ENCODE measurements at regions of chr21 and their contacts with region 1.

Region 1: GRCh38 chr21:17139720-17140119 is 373.1 kb upstream of the CXADR start:
- DNase-seq: no peak
- ATAC-seq: no peak
- H3K4me3 ChIP-seq: peak overlapping the region; percentile 37
- H3K27ac ChIP-seq: no peak overlapping the region
- H3K4me1 ChIP-seq: no peaks in the 10 kb centered on the region
- H3K27me3 ChIP-seq: no peaks in the 10 kb centered on the region
- CTCF ChIP-seq: no peak

Region 2: DNA sequence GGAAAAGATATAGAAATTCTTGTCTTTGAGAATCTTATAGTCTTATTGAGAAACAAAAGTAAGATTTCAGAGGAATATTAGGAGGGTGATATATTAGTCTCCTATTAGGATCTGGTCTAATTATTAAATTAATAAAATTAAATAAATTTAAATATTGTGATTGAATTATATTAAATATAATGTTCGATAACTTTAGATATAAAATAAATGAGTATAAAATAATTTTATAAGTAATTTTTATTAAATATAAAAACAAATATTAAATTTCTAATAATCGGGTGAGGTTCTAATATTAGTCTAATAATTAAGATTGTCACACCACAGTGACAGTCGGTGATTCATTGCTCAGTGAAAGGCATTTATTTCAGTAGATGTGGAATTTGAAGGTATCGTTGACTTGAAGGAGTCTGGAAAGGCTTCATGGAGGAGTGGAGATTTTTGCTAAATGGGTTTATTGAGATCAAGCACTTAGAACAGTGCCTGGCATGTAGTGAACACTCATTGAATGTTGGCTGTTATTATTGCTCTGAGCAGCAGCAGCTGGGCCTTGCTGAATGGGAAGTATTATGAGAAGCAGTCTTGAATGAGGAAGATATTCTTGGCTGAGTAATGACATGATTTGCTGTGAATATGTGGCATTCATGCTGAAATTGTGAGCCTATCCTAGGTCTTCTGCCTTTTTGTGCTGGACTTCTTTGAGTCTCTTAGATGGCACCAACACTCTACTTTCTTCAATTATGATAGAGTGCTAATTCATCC is 1335.3 kb before region 1 on chr21:
- intact Hi-C with region 1: no loop called
- DNase-seq: no peak
- ATAC-seq: peak in 1 of 4 donors; percentile 18
- H3K4me3 ChIP-seq: no peak overlapping the region
- H3K27ac ChIP-seq: peak overlapping the region; percentile 46
- H3K4me1 ChIP-seq: peaks cover 50% of the 10 kb centered on the region
- H3K27me3 ChIP-seq: no peaks in the 10 kb centered on the region
- CTCF ChIP-seq: no peak

Region 3: DNA sequence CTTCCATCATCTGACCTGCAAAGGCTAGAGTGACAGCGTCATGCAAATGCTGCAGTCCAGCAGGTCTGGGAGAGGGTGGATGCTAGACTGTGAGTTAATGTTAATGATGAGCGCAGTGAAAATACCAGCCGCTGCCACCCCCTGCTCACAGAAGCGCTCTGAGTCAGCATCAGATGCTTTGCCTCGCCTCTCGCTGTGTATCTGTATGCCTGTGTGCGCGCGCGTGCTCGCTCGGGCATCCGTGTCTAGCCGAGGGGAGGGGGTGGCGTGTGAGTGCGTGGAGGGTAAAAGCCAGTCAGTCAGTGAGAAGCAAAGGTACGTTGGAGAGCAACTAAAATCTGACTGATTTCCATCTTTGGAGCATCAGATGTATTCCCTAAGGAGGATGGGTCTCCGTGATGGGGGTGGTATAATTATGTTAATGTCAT is 551.3 kb before region 1 on chr21:
- intact Hi-C with region 1: loop called in 1 of 2 experiments (anchors 5 kb)
- DNase-seq: peak; percentile 63 to 65
- ATAC-seq: peak; percentile 61 to 70 (median 66)
- H3K4me3 ChIP-seq: peak overlapping the region; percentile 64
- H3K27ac ChIP-seq: peak overlapping the region; percentile 87
- H3K4me1 ChIP-seq: peaks cover 19% of the 10 kb centered on the region
- H3K27me3 ChIP-seq: no peaks in the 10 kb centered on the region
- CTCF ChIP-seq: no peak

Region 4: GRCh38 chr21:17059936-17060335 is 79.8 kb before region 1 on chr21:
- intact Hi-C with region 1: no loop called
- DNase-seq: no peak
- ATAC-seq: no peak
- H3K4me3 ChIP-seq: no peak overlapping the region
- H3K27ac ChIP-seq: no peak overlapping the region
- H3K4me1 ChIP-seq: no peaks in the 10 kb centered on the region
- H3K27me3 ChIP-seq: no peaks in the 10 kb centered on the region
- CTCF ChIP-seq: no peak

Region 5: DNA sequence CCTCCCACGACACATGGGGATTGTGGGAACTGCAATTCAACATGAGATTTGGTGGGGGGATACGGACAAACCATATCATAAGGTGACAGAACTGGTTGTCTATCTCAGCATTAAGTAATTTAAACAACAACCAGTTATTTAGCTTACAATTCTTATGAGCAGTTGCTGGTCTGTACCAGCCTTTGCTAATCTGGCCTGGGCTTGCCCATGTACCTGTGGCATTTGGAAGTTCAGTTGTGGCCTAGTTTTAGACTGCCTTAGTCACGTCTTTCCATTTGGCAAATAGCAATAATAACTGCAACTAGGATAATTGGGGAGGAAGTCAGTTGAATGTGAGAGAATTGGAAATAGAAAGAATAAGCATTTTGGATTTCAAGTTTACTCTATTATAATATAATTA is 68.6 kb before region 1 on chr21:
- intact Hi-C with region 1: no loop called
- DNase-seq: no peak
- ATAC-seq: no peak
- H3K4me3 ChIP-seq: no peak overlapping the region
- H3K27ac ChIP-seq: no peak overlapping the region
- H3K4me1 ChIP-seq: no peaks in the 10 kb centered on the region
- H3K27me3 ChIP-seq: no peaks in the 10 kb centered on the region
- CTCF ChIP-seq: no peak